Dorsolateral prefrontal cortex (tissue), 120 donors: ENCODE measurements at regions of chr1 and their contacts with region 1.

Region 1: GRCh38 chr1:112882271-112882744 is 73.7 kb downstream of the SLC16A1 start:
- DNase-seq: peak in 3 of 10 donors; percentile 19 to 56 (median 34)
- H3K4me3 ChIP-seq: no peak overlapping the region
- H3K27ac ChIP-seq: peak overlapping the region in 54 of 59 donors; percentile 15 to 89 (median 69)
- H3K27me3 ChIP-seq: no peaks in the 10 kb centered on the region
- CTCF ChIP-seq: no peak

Region 2: GRCh38 chr1:113042285-113043143 is 160.2 kb after region 1 on chr1:
- intact Hi-C with region 1: loop called (anchors 1 kb)
- DNase-seq: peak; percentile 63 to 85 (median 76)
- H3K4me3 ChIP-seq: peak overlapping the region in 21 of 59 donors; percentile 0 to 42 (median 15)
- H3K27ac ChIP-seq: peak overlapping the region; percentile 21 to 96 (median 85)
- H3K27me3 ChIP-seq: no peaks in the 10 kb centered on the region
- CTCF ChIP-seq: peak in 55 of 56 donors; percentile 50 to 82 (median 68)